ENCODE measurements at regions of chr5 and their contacts with region 1.

Region 1: DNA sequence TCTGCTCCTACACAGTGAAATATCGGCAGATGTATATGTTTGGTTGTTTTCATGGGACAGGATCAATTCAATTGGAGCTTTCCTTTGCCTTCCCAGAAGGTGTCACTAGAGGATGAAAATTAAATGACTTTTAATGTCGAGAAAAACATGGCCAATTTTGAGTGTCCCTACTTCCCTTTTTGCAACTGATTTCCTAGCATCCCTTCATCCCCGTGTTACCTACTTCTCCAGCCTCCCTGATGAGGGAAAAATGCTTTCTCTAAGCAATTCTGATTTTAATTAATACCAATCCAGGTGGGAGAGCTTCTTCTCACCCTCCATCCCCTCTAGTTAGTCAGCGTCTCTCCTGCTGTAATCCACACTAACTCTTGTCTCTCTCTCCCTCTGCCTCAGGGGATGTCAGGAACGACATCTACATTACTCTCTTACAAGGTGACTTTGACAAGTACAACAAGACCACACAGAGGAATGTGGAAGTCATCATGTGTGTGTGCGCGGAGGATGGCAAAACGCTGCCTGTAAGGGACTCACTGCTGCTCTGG is 64.9 kb downstream of the DOCK2 start:
- DNase-seq: peak in 1 of 2 experiments; percentile 17
- ATAC-seq: peak; percentile 48 to 75; a peak in 4 of 6 replicates
- H3K4me3 ChIP-seq: no peak overlapping the region
- H3K27ac ChIP-seq: peak overlapping the region; percentile 29 to 60; a peak in 3 of 6 replicates
- H3K4me1 ChIP-seq: peaks cover 31% of the 10 kb centered on the region
- CTCF ChIP-seq: peak; percentile 76
- EP300 ChIP-seq: no peak
- POLR2A ChIP-seq: no peak
- RAD21 ChIP-seq: peak; percentile 80 to 81

Region 2: GRCh38 chr5:169970911-169971765 is 269.2 kb after region 1 on chr5:
- CTCF ChIA-PET with region 1: interaction called, 12 read pairs
- POLR2A ChIA-PET with region 1: no interaction called
- DNase-seq: peak; percentile 78 to 79
- ATAC-seq: peak; percentile 86 to 93
- H3K4me3 ChIP-seq: no peak overlapping the region
- H3K27ac ChIP-seq: peak overlapping the region; percentile 56 to 84
- H3K4me1 ChIP-seq: peaks cover 21% of the 10 kb centered on the region
- CTCF ChIP-seq: no peak
- EP300 ChIP-seq: no peak; a peak in 1 of 5 replicates
- POLR2A ChIP-seq: no peak
- RAD21 ChIP-seq: 0 out of 5 replicates have a peak, but pooled peaks of 1 of the 2 experiments have one; percentile 4

Region 3: DNA sequence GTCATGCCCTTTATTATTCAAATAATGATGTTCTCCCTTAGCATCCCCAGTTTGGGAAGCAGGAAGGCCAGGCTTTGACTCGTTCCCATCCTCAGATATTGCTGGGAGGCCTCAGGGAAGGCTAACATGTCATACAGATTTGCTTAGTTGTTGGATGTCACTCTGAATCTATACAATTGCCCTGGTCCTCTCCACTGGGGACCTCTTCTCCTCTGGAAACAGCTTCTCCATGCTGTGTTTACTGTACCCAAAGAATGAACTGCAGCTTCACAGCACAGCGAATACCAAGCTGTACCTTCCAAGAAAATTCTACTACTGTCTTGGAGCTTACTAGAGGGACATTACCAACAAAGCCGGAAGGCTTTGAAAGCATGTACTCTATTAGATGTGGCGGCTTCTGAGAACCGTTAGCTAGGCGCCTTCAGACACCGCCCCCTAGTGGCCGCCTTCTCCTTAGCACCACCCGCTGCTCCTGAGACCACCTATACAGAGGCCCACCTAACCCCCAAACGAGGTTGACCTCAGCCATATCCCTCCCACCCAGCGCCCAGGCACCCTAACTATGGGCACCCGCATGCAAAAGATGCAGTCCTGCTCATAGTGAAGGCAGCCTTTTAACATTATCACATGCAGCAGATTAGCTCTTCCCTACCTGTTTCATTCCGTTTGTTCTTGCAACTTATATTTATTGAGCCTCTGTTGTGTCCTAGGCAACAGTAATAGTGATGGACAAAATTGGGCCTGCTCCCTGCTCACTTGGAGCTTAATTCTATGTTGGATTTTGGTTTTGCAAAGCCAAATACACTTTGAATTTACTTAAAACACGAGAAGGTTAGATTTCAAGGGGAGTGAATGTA is 368.8 kb after region 1 on chr5:
- CTCF ChIA-PET with region 1: interaction called, 38 read pairs
- POLR2A ChIA-PET with region 1: no interaction called
- DNase-seq: peak; percentile 45 to 52
- ATAC-seq: peak; percentile 70 to 97; a peak in 3 of 6 replicates
- H3K4me3 ChIP-seq: no peak overlapping the region
- H3K27ac ChIP-seq: no peak overlapping the region
- H3K4me1 ChIP-seq: no peaks in the 10 kb centered on the region
- CTCF ChIP-seq: peak; percentile 77
- EP300 ChIP-seq: no peak
- POLR2A ChIP-seq: no peak
- RAD21 ChIP-seq: peak; percentile 56 to 57

Region 4: GRCh38 chr5:170216266-170216864 is 514.4 kb after region 1 on chr5:
- CTCF ChIA-PET with region 1: interaction called, 12 read pairs
- POLR2A ChIA-PET with region 1: no interaction called
- DNase-seq: peak; percentile 73 to 77
- ATAC-seq: peak; percentile 81 to 92
- H3K4me3 ChIP-seq: no peak overlapping the region
- H3K27ac ChIP-seq: no peak overlapping the region
- H3K4me1 ChIP-seq: peaks cover 33% of the 10 kb centered on the region
- CTCF ChIP-seq: peak; percentile 84
- EP300 ChIP-seq: no peak
- POLR2A ChIP-seq: no peak
- RAD21 ChIP-seq: peak; percentile 94 to 99

Measured in A549 (cell line).